Activated T-helper 1 cell treated with anti-CD3 and anti-CD28 coated beads, Interleukin-12 subunit alpha, Interleukin-12 subunit beta, Interleukin-2, Interleukin-4 antibody, amounts not matched to agents 30 ng/mL and 10 ng/mL and 1 ng/mL, durations not matched to agents 14 hours and 24 hours and 36 hours (primary cell): ENCODE measurements at regions of chr11 and their contacts with region 1.

Region 1: GRCh38 chr11:118216621-118217481 is 8.0 kb downstream of the JAML start:
- DNase-seq: peak; percentile 41
- H3K4me3 Mint-ChIP-seq: peak overlapping the region; percentile 83
- H3K27ac Mint-ChIP-seq: peak overlapping the region; percentile 94
- H3K4me1 Mint-ChIP-seq: peaks cover 97% of the 10 kb centered on the region
- H3K27me3 Mint-ChIP-seq: no peaks in the 10 kb centered on the region

Region 2: DNA sequence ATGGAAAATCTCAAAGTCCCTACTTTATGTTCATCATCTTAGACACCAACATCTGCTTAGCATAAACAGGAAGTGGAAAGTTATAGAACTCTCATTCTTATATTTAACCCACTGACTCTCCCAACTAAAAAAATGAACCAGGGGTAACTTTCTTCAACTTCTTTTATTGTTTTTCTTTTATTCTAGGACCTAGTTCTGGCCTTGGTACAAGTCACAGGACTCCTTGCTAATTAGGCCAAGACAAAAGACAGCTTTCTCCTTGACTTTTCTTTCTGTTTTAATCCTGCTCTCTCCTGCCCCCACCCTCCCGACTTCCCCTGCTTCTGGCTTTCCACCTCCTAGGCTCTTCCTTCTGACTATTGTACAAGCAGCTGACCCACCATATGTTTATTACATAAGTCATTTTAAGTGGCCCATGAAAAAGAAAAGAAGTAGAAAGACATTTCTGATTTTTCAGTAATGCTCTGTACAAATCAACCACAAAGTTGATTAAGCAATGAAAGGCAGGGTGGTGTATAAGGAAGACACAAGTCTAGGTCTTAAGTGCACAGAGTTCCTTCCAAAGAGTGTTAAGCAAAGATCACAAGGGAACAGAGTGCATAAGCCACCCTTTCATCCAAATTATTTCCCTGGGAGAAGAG is 10.3 kb before region 1 on chr11:
- intact Hi-C with region 1: loop called (anchors 1 kb)
- DNase-seq: no peak
- H3K4me3 Mint-ChIP-seq: peak overlapping the region; percentile 63
- H3K27ac Mint-ChIP-seq: peak overlapping the region; percentile 99
- H3K4me1 Mint-ChIP-seq: peaks cover 58% of the 10 kb centered on the region
- H3K27me3 Mint-ChIP-seq: no peaks in the 10 kb centered on the region

Region 3: DNA sequence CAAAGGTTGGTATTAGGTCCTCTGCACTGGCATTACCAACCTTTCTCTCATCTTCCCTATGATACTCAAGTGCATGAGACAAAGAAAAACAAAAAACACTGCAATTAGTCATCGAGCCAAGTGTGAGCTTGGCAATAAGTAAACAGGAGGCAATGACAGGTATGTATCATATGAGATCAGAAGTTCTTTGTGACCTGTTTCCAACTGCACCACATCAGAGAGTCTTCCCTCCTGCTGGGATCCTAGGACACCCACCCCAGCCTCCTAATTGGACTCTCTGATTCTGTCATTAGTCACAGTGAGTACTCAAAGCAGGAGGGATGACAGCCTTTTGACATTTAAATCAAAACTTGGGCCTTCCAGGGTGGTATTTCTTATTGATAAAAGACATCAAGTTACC is 15.8 kb after region 1 on chr11:
- intact Hi-C with region 1: loop called (anchors 1 kb)
- DNase-seq: no peak
- H3K4me3 Mint-ChIP-seq: peak overlapping the region; percentile 0
- H3K27ac Mint-ChIP-seq: peak overlapping the region; percentile 78
- H3K4me1 Mint-ChIP-seq: peaks cover 18% of the 10 kb centered on the region
- H3K27me3 Mint-ChIP-seq: no peaks in the 10 kb centered on the region

Region 4: GRCh38 chr11:118290923-118291322 is 74.1 kb after region 1 on chr11:
- intact Hi-C with region 1: no loop called
- DNase-seq: peak; percentile 40
- H3K4me3 Mint-ChIP-seq: no peak overlapping the region
- H3K27ac Mint-ChIP-seq: peak overlapping the region; percentile 15
- H3K4me1 Mint-ChIP-seq: peaks cover 29% of the 10 kb centered on the region
- H3K27me3 Mint-ChIP-seq: peaks cover 2% of the 10 kb centered on the region